CD4-positive, alpha-beta memory T cell (primary cell): ENCODE measurements at regions of chr3 and their contacts with region 1.

Region 1: GRCh38 chr3:192917404-192918274 is at the start of gene MB21D2:
- DNase-seq: peak; percentile 64 to 74 (median 69)
- H3K4me3 ChIP-seq: peak within 1 kb of the TSS; percentile 58 to 91
- H3K4me3 Mint-ChIP-seq: peak within 1 kb of the TSS; percentile 92 to 98 (median 96)
- H3K27ac ChIP-seq: peak within 1 kb of the TSS; percentile 78
- H3K27ac Mint-ChIP-seq: peak within 1 kb of the TSS; percentile 91 to 97 (median 94)
- H3K4me1 ChIP-seq: peaks cover 25% of the 10 kb centered on the region
- H3K4me1 Mint-ChIP-seq: peaks cover 10 to 52% (median 33%) of the 10 kb centered on the region in 4 donors
- H3K27me3 ChIP-seq: no peaks in the 10 kb centered on the region
- H3K27me3 Mint-ChIP-seq: peaks cover 17 to 24% of the 10 kb centered on the region in 2 donors
- total RNA-seq, gene MB21D2: 3.4 to 3.5 TPM

Region 2: GRCh38 chr3:192816351-192816750 is 101.3 kb before region 1 on chr3:
- CTCF ChIA-PET with region 1: interaction called, 10 read pairs
- POLR2A ChIA-PET with region 1: interaction called, 4 read pairs
- intact Hi-C with region 1: loop called (anchors 1 kb)
- DNase-seq: peak in 4 of 5 donors; percentile 28 to 45 (median 38)
- H3K4me3 ChIP-seq: no peak overlapping the region
- H3K4me3 Mint-ChIP-seq: peak overlapping the region in 1 of 8 donors; percentile 6
- H3K27ac ChIP-seq: no peak overlapping the region
- H3K27ac Mint-ChIP-seq: peak overlapping the region in 1 of 7 donors; percentile 51
- H3K4me1 ChIP-seq: peaks cover 21% of the 10 kb centered on the region
- H3K4me1 Mint-ChIP-seq: peaks cover 2 to 51% (median 30%) of the 10 kb centered on the region in 4 donors
- H3K27me3 ChIP-seq: no peaks in the 10 kb centered on the region
- H3K27me3 Mint-ChIP-seq: no peaks in the 10 kb centered on the region

Region 3: GRCh38 chr3:192887047-192887446 is 30.6 kb before region 1 on chr3:
- CTCF ChIA-PET with region 1: interaction called, 5 read pairs
- POLR2A ChIA-PET with region 1: interaction called, 45 read pairs
- intact Hi-C with region 1: loop called (anchors 5 kb)
- DNase-seq: peak in 2 of 5 donors; percentile 5 to 45
- H3K4me3 ChIP-seq: no peak overlapping the region
- H3K4me3 Mint-ChIP-seq: peak overlapping the region; percentile 20 to 84 (median 68)
- H3K27ac ChIP-seq: no peak overlapping the region
- H3K27ac Mint-ChIP-seq: peak overlapping the region; percentile 41 to 86 (median 72)
- H3K4me1 ChIP-seq: peaks cover 57% of the 10 kb centered on the region
- H3K4me1 Mint-ChIP-seq: peaks cover 6 to 55% (median 34%) of the 10 kb centered on the region in 4 donors
- H3K27me3 ChIP-seq: no peaks in the 10 kb centered on the region
- H3K27me3 Mint-ChIP-seq: no peaks in the 10 kb centered on the region

Region 4: DNA sequence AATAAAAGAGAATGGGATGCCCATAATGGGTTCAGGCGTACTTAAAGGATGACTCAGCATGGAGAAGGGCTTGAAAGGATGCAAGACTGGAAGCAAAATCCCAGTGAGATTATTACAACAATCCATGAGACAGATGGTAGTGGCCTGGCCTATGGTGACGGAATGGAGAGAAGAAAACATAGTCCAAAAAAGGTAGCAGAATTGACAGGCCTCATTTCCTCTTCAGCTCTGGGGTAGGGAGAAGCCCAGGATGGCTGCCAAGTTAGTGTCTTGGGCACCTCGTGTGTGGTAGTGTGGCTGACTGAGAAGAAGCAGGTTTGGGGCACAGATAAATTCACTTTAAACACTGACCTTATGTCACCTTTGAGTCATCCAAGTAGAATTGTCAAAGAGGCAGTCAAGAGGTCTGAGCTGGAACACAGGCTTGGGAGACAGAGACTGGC is 18.1 kb before region 1 on chr3:
- CTCF ChIA-PET with region 1: interaction called, 6 read pairs
- POLR2A ChIA-PET with region 1: interaction called, 45 read pairs
- intact Hi-C with region 1: loop called (anchors 1 kb)
- DNase-seq: no peak
- H3K4me3 ChIP-seq: no peak overlapping the region
- H3K4me3 Mint-ChIP-seq: peak overlapping the region in 4 of 8 donors; percentile 2 to 79 (median 57)
- H3K27ac ChIP-seq: peak overlapping the region; percentile 52
- H3K27ac Mint-ChIP-seq: peak overlapping the region in 6 of 7 donors; percentile 54 to 93 (median 89)
- H3K4me1 ChIP-seq: peaks cover 55% of the 10 kb centered on the region
- H3K4me1 Mint-ChIP-seq: peaks cover 27 to 73% (median 57%) of the 10 kb centered on the region in 4 donors
- H3K27me3 ChIP-seq: no peaks in the 10 kb centered on the region
- H3K27me3 Mint-ChIP-seq: peaks cover 0 to 3% of the 10 kb centered on the region in 2 donors

Region 5: DNA sequence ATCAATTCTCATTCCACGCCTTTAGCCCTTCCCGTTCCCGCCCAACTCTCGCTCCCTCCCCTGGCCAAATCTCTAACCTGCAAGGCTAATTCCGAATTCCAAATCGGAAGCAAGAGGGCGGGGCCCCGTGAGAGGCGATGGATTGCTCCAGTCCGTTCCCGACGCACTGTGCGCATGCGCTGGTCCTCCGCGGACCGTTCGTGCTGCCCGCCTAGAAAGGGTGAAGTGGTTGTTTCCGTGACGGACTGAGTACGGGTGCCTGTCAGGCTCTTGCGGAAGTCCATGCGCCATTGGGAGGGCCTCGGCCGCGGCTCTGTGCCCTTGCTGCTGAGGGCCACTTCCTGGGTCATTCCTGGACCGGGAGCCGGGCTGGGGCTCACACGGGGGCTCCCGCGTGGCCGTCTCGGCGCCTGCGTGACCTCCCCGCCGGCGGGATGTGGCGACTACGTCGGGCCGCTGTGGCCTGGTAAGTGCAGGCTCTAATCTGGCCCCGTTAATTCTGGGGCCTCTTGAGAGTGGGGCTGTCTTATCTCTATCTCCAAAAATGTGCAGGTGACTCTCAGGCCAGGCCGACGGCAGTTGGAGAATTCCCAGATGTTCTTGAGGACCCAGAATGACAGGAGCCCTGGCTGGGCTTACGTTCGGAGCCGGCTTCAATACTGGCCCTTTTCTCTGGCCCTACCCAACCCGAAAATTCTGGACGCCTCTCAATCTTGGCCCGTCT is 675.5 kb after region 1 on chr3 and contains the start of gene OPA1:
- CTCF ChIA-PET with region 1: no interaction called
- POLR2A ChIA-PET with region 1: no interaction called
- intact Hi-C with region 1: loop called (anchors 10 kb)
- DNase-seq: peak; percentile 85 to 89 (median 86)
- H3K4me3 ChIP-seq: peak within 1 kb of the TSS; percentile 86 to 88
- H3K4me3 Mint-ChIP-seq: peak within 1 kb of the TSS; percentile 92 to 99 (median 97)
- H3K27ac ChIP-seq: peak within 1 kb of the TSS; percentile 76
- H3K27ac Mint-ChIP-seq: peak within 1 kb of the TSS; percentile 92 to 99 (median 98)
- H3K4me1 ChIP-seq: peaks cover 34% of the 10 kb centered on the region
- H3K4me1 Mint-ChIP-seq: peaks cover 38 to 58% (median 49%) of the 10 kb centered on the region in 4 donors
- H3K27me3 ChIP-seq: no peaks in the 10 kb centered on the region
- H3K27me3 Mint-ChIP-seq: no peaks in the 10 kb centered on the region
- total RNA-seq, gene OPA1: 51.5 to 59.8 TPM